Esophagus muscularis mucosa (tissue), 4 donors: ENCODE measurements at regions of chr11 and their contacts with region 1.

Region 1: DNA sequence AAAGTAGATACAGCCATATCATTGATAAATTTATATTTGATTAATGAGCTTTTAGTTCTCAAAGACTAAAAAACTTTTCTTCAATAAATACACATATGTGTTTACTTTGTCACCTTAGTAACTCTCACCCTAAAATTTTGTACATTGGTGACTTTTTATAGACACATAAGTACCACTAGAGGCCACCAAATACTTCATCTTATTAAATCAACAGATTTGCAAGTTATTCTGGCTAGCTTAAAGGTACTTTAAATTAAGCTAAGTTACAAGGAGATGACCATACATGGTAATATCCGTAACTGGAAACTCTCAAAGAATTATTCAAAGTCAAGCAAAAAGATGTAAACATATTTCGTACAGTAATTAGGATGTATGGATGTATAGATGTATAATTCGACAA is 112.2 kb downstream of the SBF2 start:
- DNase-seq: no peak
- H3K4me3 ChIP-seq: no peak overlapping the region
- H3K27ac ChIP-seq: no peak overlapping the region
- H3K4me1 ChIP-seq: no peaks in the 10 kb centered on the region
- H3K27me3 ChIP-seq: no peaks in the 10 kb centered on the region
- CTCF ChIP-seq: peak; percentile 10 to 32 (median 11)
- EP300 ChIP-seq: no peak
- POLR2A ChIP-seq: no peak

Region 2: DNA sequence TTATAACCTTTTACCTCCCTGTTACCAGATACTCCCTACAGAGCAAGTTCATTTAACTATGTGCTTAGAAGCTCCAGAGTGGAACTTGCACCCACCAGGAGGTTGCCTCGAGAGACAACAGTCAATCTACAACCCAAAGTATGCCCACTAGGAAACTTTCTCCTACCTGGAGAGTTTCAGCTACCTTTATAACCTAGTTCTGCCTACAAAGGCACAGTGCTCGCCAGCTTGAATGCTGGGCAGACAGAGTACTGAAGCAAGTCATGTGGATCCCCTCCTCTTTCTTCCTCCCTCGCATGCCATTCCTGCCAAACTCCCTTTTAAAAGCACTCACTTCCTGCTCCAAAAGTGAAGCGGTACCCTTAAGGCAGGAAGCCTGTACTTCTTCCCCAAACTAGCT is 259.0 kb before region 1 on chr11:
- intact Hi-C with region 1: no loop called
- DNase-seq: no peak
- H3K4me3 ChIP-seq: no peak overlapping the region
- H3K27ac ChIP-seq: no peak overlapping the region
- H3K4me1 ChIP-seq: no peaks in the 10 kb centered on the region
- H3K27me3 ChIP-seq: no peaks in the 10 kb centered on the region
- CTCF ChIP-seq: no peak
- EP300 ChIP-seq: no peak
- POLR2A ChIP-seq: no peak

Region 3: DNA sequence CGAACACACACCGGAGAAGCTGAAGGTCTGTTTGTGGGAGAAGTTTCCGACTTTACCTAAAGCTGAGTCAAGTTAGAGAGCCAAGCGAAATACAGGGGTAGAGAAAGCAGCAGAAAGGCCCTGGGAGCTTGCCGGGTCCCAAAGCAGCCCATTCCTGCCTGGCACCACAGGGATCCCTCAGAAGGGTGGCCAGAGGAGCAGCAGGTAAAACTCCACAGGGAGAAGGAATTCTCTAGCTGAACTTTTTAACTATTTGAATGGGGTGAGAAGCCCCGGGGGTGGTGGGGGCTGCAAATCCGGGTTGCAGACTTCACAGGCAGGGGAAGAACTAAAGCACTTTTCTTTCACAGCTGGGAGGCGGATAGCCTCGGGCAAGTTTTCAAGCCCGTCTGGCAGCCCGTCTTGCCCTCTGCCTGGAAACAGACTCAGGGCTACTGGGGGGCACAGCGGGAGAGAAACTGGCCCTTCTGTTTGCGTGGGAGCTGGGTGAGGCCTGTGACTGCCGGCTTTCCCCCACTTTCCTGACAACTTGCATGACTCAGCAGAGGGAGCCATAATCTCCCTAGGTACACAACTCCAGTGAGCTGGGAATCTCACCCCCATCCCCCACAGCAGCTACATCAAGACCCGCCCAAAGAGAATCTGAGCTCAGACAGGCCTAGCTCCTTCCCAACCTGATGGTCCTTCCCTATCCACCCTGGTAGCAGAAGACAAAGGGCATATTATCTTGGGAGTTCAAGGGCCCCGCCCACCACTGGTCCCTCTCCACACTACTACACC is 198.8 kb before region 1 on chr11:
- intact Hi-C with region 1: no loop called
- DNase-seq: no peak
- H3K4me3 ChIP-seq: no peak overlapping the region
- H3K27ac ChIP-seq: no peak overlapping the region
- H3K4me1 ChIP-seq: peaks cover 0 to 3% (median 1%) of the 10 kb centered on the region in 4 donors
- H3K27me3 ChIP-seq: no peaks in the 10 kb centered on the region
- CTCF ChIP-seq: no peak
- EP300 ChIP-seq: no peak
- POLR2A ChIP-seq: no peak

Region 4: DNA sequence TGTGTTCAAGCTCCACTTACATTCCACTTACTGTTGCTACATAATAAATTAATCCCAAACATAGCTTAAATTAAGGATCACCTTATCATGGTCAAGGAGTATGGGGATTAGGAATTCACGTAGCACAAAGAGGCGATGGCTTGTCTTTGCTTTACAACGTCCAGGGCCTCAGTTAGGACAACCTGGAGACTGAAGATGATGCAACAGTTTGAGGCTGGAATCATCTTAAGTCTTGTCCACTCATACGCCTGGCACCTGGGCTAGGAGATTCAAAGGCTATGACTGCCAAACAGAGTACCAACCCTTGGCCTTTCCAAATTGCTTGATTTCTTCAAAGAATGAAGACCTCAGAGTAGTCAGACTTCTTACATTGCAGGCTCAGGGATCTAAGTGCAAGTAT is 36.9 kb before region 1 on chr11:
- intact Hi-C with region 1: loop called (anchors 5 kb)
- DNase-seq: no peak
- H3K4me3 ChIP-seq: no peak overlapping the region
- H3K27ac ChIP-seq: no peak overlapping the region
- H3K4me1 ChIP-seq: peaks cover 6 to 18% (median 11%) of the 10 kb centered on the region in 4 donors
- H3K27me3 ChIP-seq: no peaks in the 10 kb centered on the region
- CTCF ChIP-seq: no peak
- EP300 ChIP-seq: no peak
- POLR2A ChIP-seq: no peak

Region 5: GRCh38 chr11:10263929-10264328 is 82.1 kb after region 1 on chr11:
- intact Hi-C with region 1: no loop called
- DNase-seq: no peak
- H3K4me3 ChIP-seq: no peak overlapping the region
- H3K27ac ChIP-seq: no peak overlapping the region
- H3K4me1 ChIP-seq: peaks cover 0 to 8% (median 3%) of the 10 kb centered on the region in 4 donors
- H3K27me3 ChIP-seq: no peaks in the 10 kb centered on the region
- CTCF ChIP-seq: no peak
- EP300 ChIP-seq: no peak
- POLR2A ChIP-seq: no peak